ENCODE measurements at regions of chr19 and their contacts with region 1.

Region 1: DNA sequence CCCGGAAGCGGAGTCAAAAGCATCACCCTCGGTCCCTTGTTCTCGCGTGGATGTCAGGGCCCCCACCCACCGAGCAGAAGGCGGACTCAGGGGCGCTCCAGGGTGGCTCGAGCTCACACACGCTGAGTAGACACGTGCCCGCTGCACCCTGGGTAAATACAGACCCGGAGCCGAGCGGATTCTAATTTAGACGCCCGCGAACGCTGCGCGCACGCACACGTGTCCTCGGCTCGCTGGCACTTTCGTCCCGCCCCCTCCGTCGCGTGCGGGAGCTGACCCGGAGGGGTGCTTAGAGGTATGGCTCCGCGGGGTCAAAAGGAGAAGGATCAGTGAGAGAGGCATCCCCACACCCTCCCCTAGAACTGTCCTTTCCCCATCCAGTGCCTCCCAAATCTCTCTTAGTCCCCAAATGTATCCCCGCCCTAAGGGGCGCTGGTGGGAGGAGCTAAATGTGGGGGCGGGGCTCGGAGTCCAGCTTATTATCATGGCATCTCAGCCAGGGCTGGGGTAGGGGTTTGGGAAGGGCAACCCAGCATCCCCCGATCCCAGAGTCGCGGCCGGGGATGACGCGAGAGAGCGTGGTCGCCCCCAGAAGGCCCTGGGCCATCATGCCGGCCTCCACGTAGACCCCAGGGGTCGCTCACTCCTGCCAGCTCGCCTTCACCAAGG is 451 bp upstream of the ICAM5 start:
- DNase-seq: peak; percentile 71 to 76
- H3K4me3 ChIP-seq: peak overlapping the region; percentile 78
- H3K27ac ChIP-seq: 0 out of 2 replicates have a peak overlapping the region, but pooled peaks have one; percentile 28
- H3K4me1 ChIP-seq: peaks cover 17% of the 10 kb centered on the region
- H3K27me3 ChIP-seq: no peaks in the 10 kb centered on the region
- CTCF ChIP-seq: no peak

Region 2: GRCh38 chr19:8423817-8424223 is 1865.5 kb before region 1 on chr19:
- CTCF ChIA-PET with region 1: no interaction called
- POLR2A ChIA-PET with region 1: interaction called, 11 read pairs
- intact Hi-C with region 1: no loop called
- DNase-seq: peak; percentile 91 to 98
- H3K4me3 ChIP-seq: peak overlapping the region; percentile 27; the same call in 1 of the 2 replicates
- H3K27ac ChIP-seq: peak overlapping the region; percentile 64
- H3K4me1 ChIP-seq: peaks cover 19% of the 10 kb centered on the region
- H3K27me3 ChIP-seq: no peaks in the 10 kb centered on the region
- CTCF ChIP-seq: no peak

Region 3: GRCh38 chr19:10104665-10105508 is 184.4 kb before region 1 on chr19:
- CTCF ChIA-PET with region 1: no interaction called
- POLR2A ChIA-PET with region 1: no interaction called
- intact Hi-C with region 1: no loop called
- DNase-seq: no peak
- H3K4me3 ChIP-seq: no peak overlapping the region
- H3K27ac ChIP-seq: no peak overlapping the region
- H3K4me1 ChIP-seq: peaks cover 9% of the 10 kb centered on the region
- H3K27me3 ChIP-seq: no peaks in the 10 kb centered on the region
- CTCF ChIP-seq: no peak

Region 4: GRCh38 chr19:10315335-10316214 is 26.3 kb after region 1 on chr19 and contains the start of gene FDX2:
- CTCF ChIA-PET with region 1: no interaction called
- POLR2A ChIA-PET with region 1: no interaction called
- intact Hi-C with region 1: no loop called
- DNase-seq: peak; percentile 85 to 87
- H3K4me3 ChIP-seq: peak within 1 kb of the TSS; percentile 96
- H3K27ac ChIP-seq: peak within 1 kb of the TSS; percentile 38
- H3K4me1 ChIP-seq: peaks cover 14% of the 10 kb centered on the region
- H3K27me3 ChIP-seq: no peaks in the 10 kb centered on the region
- CTCF ChIP-seq: no peak
- total RNA-seq, gene FDX2: 23.1 and 29.2 TPM in 2 replicates

Region 5: GRCh38 chr19:10332955-10333757 is 43.9 kb after region 1 on chr19 and contains the start of gene RAVER1:
- CTCF ChIA-PET with region 1: no interaction called
- POLR2A ChIA-PET with region 1: interaction called, 14 read pairs
- intact Hi-C with region 1: no loop called
- DNase-seq: peak; percentile 91 to 95
- H3K4me3 ChIP-seq: peak within 1 kb of the TSS; percentile 78
- H3K27ac ChIP-seq: peak within 1 kb of the TSS; percentile 55
- H3K4me1 ChIP-seq: peaks cover 10% of the 10 kb centered on the region
- H3K27me3 ChIP-seq: no peaks in the 10 kb centered on the region
- CTCF ChIP-seq: no peak
- total RNA-seq, gene RAVER1: 52.9 and 83.9 TPM in 2 replicates

Region 6: DNA sequence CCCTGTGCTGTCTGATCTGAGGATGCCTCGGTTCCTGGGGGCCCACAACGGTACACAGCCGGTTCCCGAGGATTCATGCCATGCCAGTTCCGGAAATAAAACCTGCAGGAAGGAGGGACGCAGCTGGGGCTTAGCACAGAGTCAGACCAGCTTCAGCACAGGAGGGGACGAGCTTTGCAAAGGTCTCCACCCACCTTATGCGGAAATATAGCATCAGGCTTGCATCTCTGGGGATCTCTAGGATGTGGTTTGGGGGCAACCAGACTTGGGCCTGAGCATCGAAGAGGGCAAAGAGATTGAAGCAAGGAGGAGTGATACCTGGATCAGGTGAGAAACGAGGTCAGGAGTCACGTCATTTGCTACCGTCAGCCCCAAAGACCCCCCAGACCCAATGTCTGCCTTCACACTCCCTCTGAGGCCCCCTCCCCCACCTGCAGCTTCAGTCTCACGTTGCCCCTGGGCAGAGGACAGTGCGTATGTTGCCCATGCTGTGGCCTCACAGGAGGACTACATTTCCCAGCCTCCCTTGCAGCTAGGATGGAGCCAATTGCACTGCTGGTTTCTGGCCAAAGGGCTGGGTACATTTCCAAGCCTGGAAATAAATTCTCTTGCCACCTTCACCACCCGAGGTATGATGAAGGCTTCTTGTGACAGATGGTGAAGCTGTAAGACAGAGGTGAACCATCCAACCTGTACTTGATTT is 79.0 kb after region 1 on chr19:
- CTCF ChIA-PET with region 1: no interaction called
- POLR2A ChIA-PET with region 1: interaction called, 11 read pairs
- intact Hi-C with region 1: no loop called
- DNase-seq: no peak
- H3K4me3 ChIP-seq: no peak overlapping the region
- H3K27ac ChIP-seq: no peak overlapping the region
- H3K4me1 ChIP-seq: no peaks in the 10 kb centered on the region
- H3K27me3 ChIP-seq: no peaks in the 10 kb centered on the region
- CTCF ChIP-seq: no peak

Measured in PC-9 (cell line).